ENCODE measurements at regions of chr3 and their contacts with region 1.

Region 1: GRCh38 chr3:172106989-172107388 is 67.6 kb downstream of the FNDC3B start:
- DNase-seq: peak; percentile 71
- H3K4me3 Mint-ChIP-seq: peak overlapping the region; percentile 75
- H3K27ac Mint-ChIP-seq: peak overlapping the region; percentile 90
- H3K4me1 Mint-ChIP-seq: peaks cover 64% of the 10 kb centered on the region
- H3K27me3 Mint-ChIP-seq: no peaks in the 10 kb centered on the region

Region 2: GRCh38 chr3:171846597-171846996 is 260.4 kb before region 1 on chr3:
- intact Hi-C with region 1: loop called (anchors 10 kb)
- DNase-seq: no peak
- H3K4me3 Mint-ChIP-seq: peak overlapping the region; percentile 47
- H3K27ac Mint-ChIP-seq: peak overlapping the region; percentile 84
- H3K4me1 Mint-ChIP-seq: peaks cover 24% of the 10 kb centered on the region
- H3K27me3 Mint-ChIP-seq: peaks cover 12% of the 10 kb centered on the region

Region 3: GRCh38 chr3:172039436-172040077 is 67.4 kb before region 1 on chr3 and contains the start of gene FNDC3B:
- intact Hi-C with region 1: loop called (anchors 1 kb)
- DNase-seq: peak; percentile 89
- H3K4me3 Mint-ChIP-seq: peak within 1 kb of the TSS; percentile 98
- H3K27ac Mint-ChIP-seq: peak within 1 kb of the TSS; percentile 98
- H3K4me1 Mint-ChIP-seq: peaks cover 25% of the 10 kb centered on the region
- H3K27me3 Mint-ChIP-seq: peaks cover 10% of the 10 kb centered on the region
- total RNA-seq, gene FNDC3B: 24.7 and 26.9 TPM in 2 replicates

Region 4: GRCh38 chr3:172094621-172095557 is 12.1 kb before region 1 on chr3:
- intact Hi-C with region 1: loop called (anchors 1 kb)
- DNase-seq: no peak
- H3K4me3 Mint-ChIP-seq: no peak overlapping the region
- H3K27ac Mint-ChIP-seq: peak overlapping the region; percentile 60
- H3K4me1 Mint-ChIP-seq: peaks cover 46% of the 10 kb centered on the region
- H3K27me3 Mint-ChIP-seq: no peaks in the 10 kb centered on the region

Region 5: DNA sequence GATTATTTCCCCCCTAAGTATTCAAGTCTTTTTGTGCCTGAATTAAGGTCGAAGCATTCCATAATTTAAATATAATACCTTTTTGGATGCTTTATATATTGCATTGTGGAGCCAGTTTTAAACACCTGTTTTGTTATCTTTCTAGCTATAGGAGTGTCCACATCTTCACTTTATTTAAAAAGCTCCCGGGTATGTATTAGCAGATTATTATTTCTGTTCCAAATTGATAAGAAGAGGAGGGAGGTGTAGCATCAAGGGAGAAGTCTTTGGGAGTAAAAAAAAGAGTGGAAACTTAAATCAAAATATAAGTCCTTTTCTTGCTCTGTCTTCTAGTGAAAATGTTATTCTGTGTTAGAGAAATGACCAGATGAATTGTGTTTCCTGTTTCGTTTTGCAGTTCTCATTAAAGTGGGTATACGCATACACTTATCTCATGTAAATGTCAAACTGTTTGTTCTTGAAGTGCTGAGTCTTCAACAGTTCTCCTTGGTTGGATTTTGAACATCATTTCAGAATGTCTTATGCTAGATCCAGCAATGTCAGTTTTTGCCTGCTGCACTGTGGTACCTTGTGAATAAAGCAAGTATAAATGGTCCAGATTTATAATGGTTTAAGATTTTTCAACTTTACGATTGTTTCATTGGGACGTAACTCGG is 38.2 kb after region 1 on chr3:
- intact Hi-C with region 1: loop called (anchors 5 kb)
- DNase-seq: no peak
- H3K4me3 Mint-ChIP-seq: peak overlapping the region; percentile 11
- H3K27ac Mint-ChIP-seq: peak overlapping the region; percentile 59
- H3K4me1 Mint-ChIP-seq: peaks cover 59% of the 10 kb centered on the region
- H3K27me3 Mint-ChIP-seq: no peaks in the 10 kb centered on the region

Region 6: GRCh38 chr3:172511783-172512762 is 405.1 kb after region 1 on chr3:
- intact Hi-C with region 1: loop called (anchors 5 kb)
- DNase-seq: peak; percentile 63
- H3K4me3 Mint-ChIP-seq: peak overlapping the region; percentile 43
- H3K27ac Mint-ChIP-seq: peak overlapping the region; percentile 90
- H3K4me1 Mint-ChIP-seq: peaks cover 75% of the 10 kb centered on the region
- H3K27me3 Mint-ChIP-seq: no peaks in the 10 kb centered on the region